BJ (cell line): ENCODE measurements at regions of chr5 and their contacts with region 1.

Region 1: DNA sequence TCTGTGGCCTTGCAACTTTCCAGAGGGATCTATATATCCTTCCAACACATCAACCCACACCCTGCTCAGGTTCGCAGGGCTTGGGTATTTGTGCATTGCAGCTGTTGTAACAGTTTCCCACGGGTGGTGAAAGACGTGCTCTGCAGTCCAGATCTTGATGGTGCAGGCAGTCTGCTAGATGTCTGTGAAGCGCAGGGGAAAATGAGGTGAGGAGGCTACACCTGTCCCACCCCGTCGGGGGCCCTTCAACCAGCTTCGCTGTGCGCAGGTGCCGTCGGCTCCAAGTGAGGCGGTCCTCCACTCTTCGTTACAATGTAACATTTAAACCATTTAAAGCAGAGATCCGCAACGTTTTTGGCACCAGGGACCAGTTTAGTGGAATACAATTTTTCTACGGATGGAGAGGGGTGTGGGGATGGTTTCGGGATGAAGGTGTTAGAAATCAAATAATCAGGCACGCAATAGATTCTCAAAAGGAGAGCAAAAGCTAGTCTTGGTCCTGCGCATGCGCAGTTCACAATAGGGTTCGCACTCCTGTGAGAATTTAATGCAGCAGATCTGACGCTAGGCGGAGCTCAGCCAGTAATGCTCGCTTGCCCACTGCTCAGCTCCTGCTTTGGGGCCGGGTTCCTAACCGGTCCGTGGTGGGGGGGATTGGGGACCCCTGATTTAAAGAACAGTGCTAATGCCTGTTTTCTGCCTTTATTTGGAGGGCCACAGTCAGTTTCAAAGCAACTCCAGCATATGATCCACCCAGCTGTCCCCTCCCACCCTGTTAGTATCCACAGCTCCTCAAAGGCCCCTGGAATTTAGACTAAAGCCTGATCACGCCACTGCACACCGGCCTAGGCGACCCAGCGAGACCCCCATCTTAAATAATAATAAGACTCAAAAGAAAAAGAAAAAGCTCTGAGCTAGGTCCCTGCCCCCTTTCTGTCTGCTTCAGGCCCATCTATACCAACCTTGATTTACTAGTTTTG is 97.1 kb upstream of the SELENOP start:
- DNase-seq: peak; percentile 14
- H3K4me3 ChIP-seq: peak overlapping the region; percentile 41
- H3K27me3 ChIP-seq: peaks cover 7% of the 10 kb centered on the region
- CTCF ChIP-seq: peak; percentile 88

Region 2: DNA sequence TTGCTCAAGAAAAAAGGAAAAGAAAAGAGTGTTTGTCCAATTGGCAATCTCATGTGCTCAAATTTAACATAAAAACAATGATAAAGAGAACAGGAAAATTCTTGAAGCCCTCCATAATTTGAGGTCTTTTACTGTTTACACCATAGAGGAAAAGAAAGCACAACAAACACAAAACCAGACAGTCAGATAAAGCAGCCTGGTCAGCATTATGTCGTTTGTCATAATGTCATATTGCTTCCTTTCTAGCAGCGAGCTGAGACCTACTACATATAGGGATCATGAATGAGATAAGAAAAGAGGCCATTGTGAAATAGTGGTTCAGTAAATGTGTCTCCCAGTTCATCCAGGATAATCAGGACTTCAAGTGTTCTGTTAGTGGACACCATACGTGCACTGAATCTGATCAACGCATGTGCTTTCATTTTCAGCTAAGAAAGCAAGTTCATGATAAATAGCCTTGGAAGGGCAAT is 32.4 kb before region 1 on chr5:
- CTCF ChIA-PET with region 1: no interaction called
- POLR2A ChIA-PET with region 1: no interaction called
- DNase-seq: no peak
- H3K4me3 ChIP-seq: no peak overlapping the region
- H3K27me3 ChIP-seq: no peaks in the 10 kb centered on the region; the same call in 1 of the 2 replicates
- CTCF ChIP-seq: no peak

Region 3: DNA sequence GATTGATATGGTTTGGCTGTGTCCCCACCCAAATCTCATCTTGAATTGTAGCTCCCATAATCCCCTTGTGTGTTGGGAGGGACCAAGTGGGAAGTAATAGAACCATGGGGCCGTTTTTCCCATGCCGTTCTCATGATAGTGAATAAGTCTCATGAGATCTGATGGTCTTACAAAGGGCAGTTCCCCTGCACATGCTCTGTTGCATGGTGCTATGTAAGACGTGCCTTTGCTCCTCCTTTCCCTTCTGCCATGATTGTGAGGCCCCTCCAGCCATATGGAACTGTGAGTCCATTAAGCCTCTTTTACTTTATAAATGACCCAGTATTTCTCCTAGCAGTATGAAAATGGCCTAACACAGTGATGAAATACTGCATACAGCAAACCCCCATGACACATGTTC is 12.3 kb before region 1 on chr5:
- CTCF ChIA-PET with region 1: interaction called, 10 read pairs
- POLR2A ChIA-PET with region 1: no interaction called
- DNase-seq: no peak
- H3K4me3 ChIP-seq: no peak overlapping the region
- H3K27me3 ChIP-seq: peaks cover 1% of the 10 kb centered on the region; the same call in 1 of the 2 replicates
- CTCF ChIP-seq: no peak

Region 4: GRCh38 chr5:42950440-42951292 is 41.9 kb after region 1 on chr5:
- CTCF ChIA-PET with region 1: interaction called, 18 read pairs
- POLR2A ChIA-PET with region 1: interaction called, 4 read pairs
- DNase-seq: peak; percentile 98
- H3K4me3 ChIP-seq: peak overlapping the region; percentile 38
- H3K27me3 ChIP-seq: no peaks in the 10 kb centered on the region
- CTCF ChIP-seq: no peak

Region 5: GRCh38 chr5:43040287-43041098 is 131.7 kb after region 1 on chr5 and contains the start of gene ANXA2R:
- CTCF ChIA-PET with region 1: interaction called, 95 read pairs
- POLR2A ChIA-PET with region 1: no interaction called
- DNase-seq: peak; percentile 67
- H3K4me3 ChIP-seq: peak within 1 kb of the TSS; percentile 52
- H3K27me3 ChIP-seq: no peaks in the 10 kb centered on the region
- CTCF ChIP-seq: peak; percentile 85
- polyA plus RNA-seq, gene ANXA2R: 0.53 and 0.74 TPM in 2 replicates

Region 6: DNA sequence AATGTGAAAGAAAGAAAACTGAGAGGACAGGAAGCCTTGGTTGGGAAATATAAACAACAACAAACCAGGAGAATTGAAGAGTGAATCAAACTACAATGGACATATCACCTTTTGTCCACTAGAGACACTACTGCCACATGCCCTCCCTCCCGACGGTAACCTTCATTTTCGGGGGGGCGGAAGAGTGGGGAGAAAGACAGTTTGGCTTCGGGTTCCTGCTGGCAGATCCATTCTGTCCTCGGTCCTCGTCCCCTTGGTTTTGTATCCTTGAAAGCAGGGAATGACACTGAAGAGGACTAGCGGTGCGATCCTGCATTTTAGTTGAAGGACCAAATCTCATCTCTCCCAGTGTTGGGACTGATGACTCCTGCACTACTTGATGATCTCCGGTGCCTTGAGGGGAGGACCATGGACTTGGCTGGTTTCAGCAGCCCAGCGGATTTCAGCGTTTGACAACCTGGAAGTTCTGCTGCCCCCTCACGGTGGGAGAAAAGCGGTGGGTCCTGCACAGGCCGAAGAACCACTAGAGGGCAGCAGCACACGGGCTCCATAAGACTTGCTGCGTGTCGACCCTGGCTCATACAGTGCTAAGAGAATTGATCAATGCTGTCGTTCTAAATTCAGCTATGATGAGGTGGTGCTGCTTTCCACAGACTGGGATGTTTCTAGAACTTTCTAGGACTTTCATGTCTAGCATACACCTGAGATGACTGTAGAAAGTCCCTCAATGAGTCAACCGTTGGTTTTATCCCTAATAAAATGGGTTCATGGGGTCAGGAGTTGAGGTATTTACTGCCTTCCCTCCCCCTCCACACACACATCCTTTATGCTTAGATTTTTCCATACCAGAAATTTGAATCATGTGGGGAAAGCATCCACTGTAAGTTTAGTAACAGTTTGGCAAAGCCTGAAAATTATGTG is 196.8 kb after region 1 on chr5:
- CTCF ChIA-PET with region 1: interaction called, 12 read pairs
- POLR2A ChIA-PET with region 1: no interaction called
- DNase-seq: peak; percentile 83
- H3K4me3 ChIP-seq: peak overlapping the region; percentile 25
- H3K27me3 ChIP-seq: no peaks in the 10 kb centered on the region
- CTCF ChIP-seq: peak; percentile 100